CD8-positive, alpha-beta T cell (primary cell): ENCODE measurements at regions of chr1 and their contacts with region 1.

Region 1: DNA sequence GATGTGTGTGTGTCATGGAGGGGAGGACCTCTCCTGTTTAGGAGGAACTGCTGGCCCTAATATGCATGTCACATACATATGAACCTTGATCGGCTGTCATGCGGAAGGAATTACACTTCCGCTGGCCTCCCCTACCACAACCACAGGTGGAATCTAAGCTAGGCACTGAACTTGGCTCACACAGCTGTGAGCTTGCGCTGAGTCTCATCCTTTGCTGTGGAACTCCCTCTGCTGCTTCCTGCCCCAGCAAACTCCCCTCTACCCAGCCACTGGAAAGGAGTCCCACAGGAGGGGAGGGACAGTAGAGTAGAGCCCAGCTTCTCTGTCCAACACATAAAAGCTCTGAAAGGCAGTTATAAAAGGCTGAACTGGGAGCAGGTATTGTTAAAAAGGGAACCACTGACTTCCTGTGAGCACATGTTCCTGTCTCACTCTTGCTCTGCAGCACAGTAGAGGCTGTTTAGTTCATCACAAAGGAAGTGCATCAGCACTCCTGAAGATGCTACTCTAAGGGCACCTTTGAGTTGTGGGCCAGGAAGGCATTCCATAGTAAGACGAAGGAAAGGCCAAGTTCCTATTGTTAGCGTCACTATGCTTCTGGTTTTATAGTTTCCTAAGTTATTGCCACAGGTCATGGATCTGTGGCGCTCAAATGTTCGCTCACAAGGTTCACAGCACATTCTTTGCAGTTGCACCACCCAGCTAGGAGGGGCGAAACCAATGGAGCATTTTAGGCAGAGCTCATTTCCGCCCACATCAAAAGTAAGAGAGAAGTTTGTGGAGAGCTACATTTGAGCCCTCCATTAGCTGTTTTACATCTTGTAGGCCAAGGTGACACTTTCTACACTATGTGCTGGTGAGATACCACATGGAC is 17.7 kb upstream of the PTPRC start:
- DNase-seq: peak; percentile 29 to 91 (median 67)
- ATAC-seq: peak; percentile 76
- H3K4me3 ChIP-seq: peak overlapping the region; percentile 34 to 38
- H3K4me3 Mint-ChIP-seq: peak overlapping the region; percentile 78
- H3K27ac ChIP-seq: peak overlapping the region; percentile 68 to 72
- H3K27ac Mint-ChIP-seq: peak overlapping the region; percentile 93
- H3K4me1 ChIP-seq: peaks cover 75% of the 10 kb centered on the region
- H3K4me1 Mint-ChIP-seq: peaks cover 91% of the 10 kb centered on the region
- H3K27me3 ChIP-seq: no peaks in the 10 kb centered on the region
- H3K27me3 Mint-ChIP-seq: no peaks in the 10 kb centered on the region
- CTCF ChIP-seq: no peak

Region 2: GRCh38 chr1:198520524-198521254 is 100.5 kb before region 1 on chr1:
- CTCF ChIA-PET with region 1: interaction called, 10 read pairs
- POLR2A ChIA-PET with region 1: interaction called, 10 read pairs
- intact Hi-C with region 1: loop called in 1 of 2 experiments (anchors 2 kb)
- DNase-seq: peak in 2 of 9 experiments; percentile 57 to 73
- ATAC-seq: peak; percentile 57
- H3K4me3 ChIP-seq: peak overlapping the region; percentile 11 to 30
- H3K4me3 Mint-ChIP-seq: peak overlapping the region; percentile 72
- H3K27ac ChIP-seq: peak overlapping the region; percentile 6 to 75
- H3K27ac Mint-ChIP-seq: peak overlapping the region; percentile 89
- H3K4me1 ChIP-seq: peaks cover 58% of the 10 kb centered on the region
- H3K4me1 Mint-ChIP-seq: peaks cover 72% of the 10 kb centered on the region
- H3K27me3 ChIP-seq: no peaks in the 10 kb centered on the region
- H3K27me3 Mint-ChIP-seq: no peaks in the 10 kb centered on the region
- CTCF ChIP-seq: no peak

Region 3: GRCh38 chr1:198606020-198606438 is 15.2 kb before region 1 on chr1:
- CTCF ChIA-PET with region 1: interaction called, 17 read pairs
- POLR2A ChIA-PET with region 1: interaction called, 32 read pairs
- intact Hi-C with region 1: loop called in 1 of 2 experiments (anchors 2 kb)
- DNase-seq: no peak
- ATAC-seq: no peak
- H3K4me3 ChIP-seq: no peak overlapping the region
- H3K4me3 Mint-ChIP-seq: no peak overlapping the region
- H3K27ac ChIP-seq: no peak overlapping the region
- H3K27ac Mint-ChIP-seq: no peak overlapping the region
- H3K4me1 ChIP-seq: peaks cover 64% of the 10 kb centered on the region
- H3K4me1 Mint-ChIP-seq: peaks cover 68% of the 10 kb centered on the region
- H3K27me3 ChIP-seq: no peaks in the 10 kb centered on the region
- H3K27me3 Mint-ChIP-seq: no peaks in the 10 kb centered on the region
- CTCF ChIP-seq: no peak

Region 4: DNA sequence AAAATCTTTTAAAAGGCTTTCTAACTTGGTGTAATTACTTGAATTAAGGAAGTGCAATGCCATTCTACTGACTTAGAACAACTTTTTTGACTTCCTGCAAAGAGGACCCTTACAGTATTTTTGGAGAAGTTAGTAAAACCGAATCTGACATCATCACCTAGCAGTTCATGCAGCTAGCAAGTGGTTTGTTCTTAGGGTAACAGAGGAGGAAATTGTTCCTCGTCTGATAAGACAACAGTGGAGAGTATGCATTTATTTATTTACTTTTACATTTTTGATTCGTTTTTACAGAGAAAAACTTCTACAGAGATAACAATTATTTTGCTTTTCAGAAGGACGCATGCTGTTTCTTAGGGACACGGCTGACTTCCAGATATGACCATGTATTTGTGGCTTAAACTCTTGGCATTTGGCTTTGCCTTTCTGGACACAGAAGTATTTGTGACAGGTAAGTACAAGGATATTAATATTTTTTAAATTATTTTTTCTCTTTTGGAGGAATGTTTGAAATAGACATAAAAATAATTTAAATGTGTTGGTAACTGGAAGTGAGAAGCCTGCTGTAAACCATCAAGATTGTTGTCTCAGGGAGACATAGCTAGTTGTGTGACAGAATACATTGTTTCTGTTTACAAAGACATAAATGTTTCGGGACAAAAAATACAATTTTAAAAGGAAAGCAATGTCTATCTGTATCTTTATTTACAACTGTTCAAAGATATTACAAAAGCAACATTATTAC is 17.9 kb after region 1 on chr1 and contains the start of gene PTPRC:
- CTCF ChIA-PET with region 1: interaction called, 62 read pairs
- POLR2A ChIA-PET with region 1: interaction called, 105 read pairs
- intact Hi-C with region 1: loop called in 1 of 2 experiments (anchors 1 kb)
- DNase-seq: peak in 2 of 9 experiments; percentile 67 to 85
- ATAC-seq: peak; percentile 79
- H3K4me3 ChIP-seq: peak within 1 kb of the TSS; percentile 76 to 83
- H3K4me3 Mint-ChIP-seq: peak within 1 kb of the TSS; percentile 85
- H3K27ac ChIP-seq: peak within 1 kb of the TSS; percentile 80 to 82
- H3K27ac Mint-ChIP-seq: peak within 1 kb of the TSS; percentile 92
- H3K4me1 ChIP-seq: peaks cover 45% of the 10 kb centered on the region
- H3K4me1 Mint-ChIP-seq: peaks cover 56% of the 10 kb centered on the region
- H3K27me3 ChIP-seq: no peaks in the 10 kb centered on the region
- H3K27me3 Mint-ChIP-seq: no peaks in the 10 kb centered on the region
- CTCF ChIP-seq: no peak
- total RNA-seq, gene PTPRC: 603 to 634 TPM

Region 5: GRCh38 chr1:198657550-198658064 is 36.4 kb after region 1 on chr1:
- CTCF ChIA-PET with region 1: interaction called, 5 read pairs
- POLR2A ChIA-PET with region 1: interaction called, 66 read pairs
- intact Hi-C with region 1: loop called in 1 of 2 experiments (anchors 5 kb)
- DNase-seq: peak in 3 of 9 experiments; percentile 47 to 87 (median 73)
- ATAC-seq: peak; percentile 23
- H3K4me3 ChIP-seq: peak overlapping the region; percentile 18 to 26
- H3K4me3 Mint-ChIP-seq: peak overlapping the region; percentile 74
- H3K27ac ChIP-seq: peak overlapping the region; percentile 64 to 97
- H3K27ac Mint-ChIP-seq: peak overlapping the region; percentile 98
- H3K4me1 ChIP-seq: peaks cover 84% of the 10 kb centered on the region
- H3K4me1 Mint-ChIP-seq: peaks cover 71% of the 10 kb centered on the region
- H3K27me3 ChIP-seq: no peaks in the 10 kb centered on the region
- H3K27me3 Mint-ChIP-seq: no peaks in the 10 kb centered on the region
- CTCF ChIP-seq: no peak